PC-3 (cell line): ENCODE measurements at regions of chr20 and their contacts with region 1.

Region 1: DNA sequence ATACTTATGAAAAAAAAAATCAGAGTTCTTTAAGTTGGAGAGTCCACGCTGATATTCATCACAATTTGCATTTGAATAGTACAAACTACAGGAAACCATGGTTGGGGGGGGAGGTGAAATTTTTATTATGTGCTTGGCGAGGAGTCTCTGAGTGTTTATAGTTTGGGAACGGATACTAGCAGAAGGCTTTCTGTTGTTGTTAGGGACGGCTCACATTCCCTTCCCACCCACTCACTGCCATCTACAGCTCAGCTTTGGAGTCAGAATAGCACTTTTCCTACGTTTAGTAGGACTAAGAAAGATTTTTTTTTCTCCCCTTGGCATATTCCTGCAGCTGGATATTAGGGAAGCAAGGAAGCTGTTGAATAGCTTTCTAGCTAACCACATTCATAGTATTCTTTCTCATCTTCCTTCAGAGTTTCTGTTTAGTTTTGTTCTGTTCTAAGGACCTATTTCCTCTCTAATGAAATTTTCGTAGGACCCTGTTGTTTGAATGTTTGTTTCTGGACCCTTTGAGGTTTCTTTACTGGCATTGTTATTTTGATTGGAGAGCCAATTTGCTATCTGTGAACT is 235.1 kb upstream of the ZNF217 start:
- DNase-seq: peak; percentile 93
- ATAC-seq: peak; percentile 77
- H3K4me3 ChIP-seq: peak overlapping the region; percentile 61
- H3K27ac ChIP-seq: peak overlapping the region; percentile 93
- H3K4me1 ChIP-seq: peaks cover 49% of the 10 kb centered on the region
- H3K27me3 ChIP-seq: no peaks in the 10 kb centered on the region
- CTCF ChIP-seq: peak; percentile 62

Region 2: GRCh38 chr20:53623454-53624211 is 205.1 kb before region 1 on chr20:
- CTCF ChIA-PET with region 1: no interaction called
- POLR2A ChIA-PET with region 1: interaction called, 4 read pairs
- intact Hi-C with region 1: loop called (anchors 1 kb)
- DNase-seq: peak; percentile 89
- ATAC-seq: peak; percentile 62
- H3K4me3 ChIP-seq: peak overlapping the region; percentile 63
- H3K27ac ChIP-seq: peak overlapping the region; percentile 89
- H3K4me1 ChIP-seq: peaks cover 41% of the 10 kb centered on the region
- H3K27me3 ChIP-seq: no peaks in the 10 kb centered on the region
- CTCF ChIP-seq: peak; percentile 38; the same call in 1 of the 2 replicates

Region 3: DNA sequence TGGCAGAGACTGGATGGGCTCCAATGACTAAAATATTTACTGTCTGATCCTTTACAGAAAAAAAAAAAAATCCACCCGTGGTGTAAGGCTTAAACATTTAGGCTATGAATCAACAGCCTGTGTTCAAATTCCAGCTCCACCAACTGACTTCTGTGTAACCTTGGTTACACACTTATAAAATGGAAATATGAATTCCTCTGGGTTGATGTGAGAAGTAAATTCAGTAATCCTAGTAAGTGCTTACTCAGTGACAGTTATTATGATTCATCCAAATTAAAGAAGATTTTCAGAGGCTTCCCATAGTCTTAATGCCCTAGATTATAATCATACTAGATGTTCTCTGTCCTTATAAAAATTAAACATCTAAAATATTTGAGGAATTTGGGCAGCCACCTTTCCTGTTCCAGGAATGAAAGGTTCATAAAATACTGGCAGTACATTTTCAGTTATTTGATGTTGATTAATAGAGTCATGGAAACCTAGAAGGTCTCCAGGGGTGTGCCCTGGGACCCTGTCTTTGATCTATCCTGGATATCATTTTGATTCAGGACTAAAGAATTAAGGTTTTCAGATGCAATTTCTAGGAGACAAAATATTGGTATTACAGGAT is 54.9 kb before region 1 on chr20:
- CTCF ChIA-PET with region 1: no interaction called
- POLR2A ChIA-PET with region 1: interaction called, 11 read pairs
- intact Hi-C with region 1: loop called (anchors 1 kb)
- DNase-seq: peak; percentile 100
- ATAC-seq: peak; percentile 75
- H3K4me3 ChIP-seq: peak overlapping the region; percentile 54
- H3K27ac ChIP-seq: peak overlapping the region; percentile 92
- H3K4me1 ChIP-seq: peaks cover 48% of the 10 kb centered on the region
- H3K27me3 ChIP-seq: no peaks in the 10 kb centered on the region
- CTCF ChIP-seq: no peak

Region 4: DNA sequence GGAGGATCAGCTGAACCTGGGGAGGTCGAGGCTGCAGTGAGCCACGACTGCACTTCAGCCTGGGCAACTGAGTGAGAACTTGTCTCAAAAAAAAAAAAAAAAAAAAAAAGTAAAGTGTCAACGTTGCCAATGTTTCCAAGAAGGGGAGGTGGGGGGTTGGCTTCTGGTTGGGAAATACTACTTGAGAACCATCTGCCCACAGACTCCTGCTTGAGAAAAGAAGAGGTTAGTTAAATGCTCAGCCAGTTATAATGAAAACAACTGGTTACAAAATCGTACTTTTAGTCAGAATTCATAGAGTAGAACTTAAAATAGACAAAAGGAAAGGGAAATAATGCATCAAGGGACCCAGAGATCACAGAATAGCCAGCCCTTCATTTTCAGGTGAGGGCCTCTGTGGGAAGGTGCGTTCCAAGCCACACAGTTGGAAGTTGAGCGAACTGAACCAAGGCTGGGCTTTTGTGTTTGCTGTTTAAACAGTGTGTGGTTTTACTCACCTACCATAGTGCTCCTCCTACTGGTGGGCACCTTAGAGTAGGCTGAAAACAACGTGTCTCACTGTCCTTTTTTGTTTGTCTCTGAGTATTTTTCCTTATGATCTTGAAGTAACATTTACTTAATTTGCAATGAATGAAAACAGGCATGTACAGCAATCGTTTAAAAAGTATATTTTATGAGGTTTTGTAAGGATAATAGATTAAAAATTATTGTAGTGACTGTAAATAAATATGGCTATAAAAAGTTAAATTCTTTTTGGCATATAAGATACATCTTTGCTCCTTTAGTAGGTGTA is 40.9 kb after region 1 on chr20:
- CTCF ChIA-PET with region 1: no interaction called
- POLR2A ChIA-PET with region 1: interaction called, 6 read pairs
- intact Hi-C with region 1: loop called (anchors 1 kb)
- DNase-seq: peak; percentile 98
- ATAC-seq: peak; percentile 71
- H3K4me3 ChIP-seq: peak overlapping the region; percentile 3; the same call in 1 of the 2 replicates
- H3K27ac ChIP-seq: peak overlapping the region; percentile 87
- H3K4me1 ChIP-seq: peaks cover 73% of the 10 kb centered on the region
- H3K27me3 ChIP-seq: no peaks in the 10 kb centered on the region
- CTCF ChIP-seq: peak; percentile 99

Region 5: DNA sequence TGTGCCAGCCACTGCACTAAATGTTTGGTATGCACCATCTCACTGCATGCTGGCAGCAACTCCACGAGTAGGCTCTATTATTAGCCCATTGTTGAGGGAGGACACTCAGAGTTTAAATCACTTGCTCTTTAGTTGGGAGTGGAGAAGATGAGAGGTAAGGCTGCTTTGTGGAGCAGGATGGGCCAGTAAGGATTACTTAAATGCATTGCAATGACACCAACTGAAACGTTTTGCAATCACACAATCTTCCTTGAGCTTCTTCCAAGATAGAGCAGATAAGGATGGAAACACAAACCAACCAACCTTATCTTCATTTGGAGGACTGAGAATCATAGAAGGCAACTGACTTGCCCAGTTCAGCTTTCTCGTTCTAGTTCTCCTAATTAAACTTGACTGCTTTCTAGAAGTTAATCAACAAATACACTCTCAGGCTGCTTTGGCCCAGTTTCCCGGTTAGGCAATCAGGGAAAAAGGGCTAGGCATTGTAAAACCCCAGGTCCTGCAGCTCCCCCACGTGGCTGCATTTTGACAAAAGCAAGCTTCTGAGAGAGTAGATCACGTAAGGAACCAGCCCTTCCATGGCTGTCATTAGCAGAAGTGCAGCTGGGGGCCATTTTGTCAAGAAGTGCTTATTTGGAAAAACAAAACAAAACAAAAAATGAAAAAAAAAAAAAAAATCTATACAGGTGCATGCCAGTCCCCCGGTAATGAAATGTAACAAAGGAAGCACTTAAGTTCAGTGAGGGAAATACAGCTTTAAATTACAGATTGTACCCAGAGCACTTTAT is 111.0 kb after region 1 on chr20:
- CTCF ChIA-PET with region 1: no interaction called
- POLR2A ChIA-PET with region 1: no interaction called
- intact Hi-C with region 1: loop called (anchors 1 kb)
- DNase-seq: peak; percentile 100
- ATAC-seq: peak; percentile 84
- H3K4me3 ChIP-seq: no peak overlapping the region
- H3K27ac ChIP-seq: peak overlapping the region; percentile 70
- H3K4me1 ChIP-seq: peaks cover 43% of the 10 kb centered on the region
- H3K27me3 ChIP-seq: no peaks in the 10 kb centered on the region
- CTCF ChIP-seq: peak; percentile 99

Region 6: DNA sequence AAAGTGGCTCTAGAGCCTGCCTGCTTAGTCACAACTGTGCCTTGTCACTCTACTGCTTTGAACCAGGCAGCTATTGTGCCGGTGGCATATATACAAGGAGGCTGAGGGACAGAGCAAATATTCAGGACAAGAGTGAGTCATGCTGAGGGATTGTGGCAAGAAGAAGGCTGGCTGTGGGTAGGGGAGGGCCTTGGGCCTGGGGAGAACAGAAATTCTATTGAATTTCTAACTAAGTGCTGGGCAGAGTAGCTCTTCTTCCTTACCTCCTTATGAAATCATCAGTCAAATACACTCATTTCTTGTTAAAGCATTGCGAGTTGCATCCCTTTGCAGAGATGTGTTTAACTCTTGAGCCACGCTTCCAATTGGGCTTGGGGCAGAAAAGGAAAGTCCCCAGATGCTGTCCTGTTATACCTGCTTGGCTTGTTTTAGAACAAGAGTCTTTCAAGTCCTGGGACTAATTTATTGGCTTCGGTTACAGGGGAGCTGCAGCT is 438.8 kb after region 1 on chr20:
- CTCF ChIA-PET with region 1: no interaction called
- POLR2A ChIA-PET with region 1: no interaction called
- intact Hi-C with region 1: no loop called
- DNase-seq: peak; percentile 91
- ATAC-seq: peak; percentile 73
- H3K4me3 ChIP-seq: peak overlapping the region; percentile 25; the same call in 1 of the 2 replicates
- H3K27ac ChIP-seq: peak overlapping the region; percentile 46
- H3K4me1 ChIP-seq: peaks cover 20% of the 10 kb centered on the region
- H3K27me3 ChIP-seq: peaks cover 13% of the 10 kb centered on the region
- CTCF ChIP-seq: no peak